Head of caudate nucleus (tissue), 42 donors: ENCODE measurements at regions of chr6 and their contacts with region 1.

Region 1: GRCh38 chr6:43059168-43060033 is at the starts of genes KLC4 and MRPL2:
- DNase-seq: peak; percentile 96 to 100 (median 99)

Region 2: GRCh38 chr6:42988486-42989020 is 70.8 kb before region 1 on chr6:
- intact Hi-C with region 1: no loop called
- DNase-seq: no peak

Region 3: DNA sequence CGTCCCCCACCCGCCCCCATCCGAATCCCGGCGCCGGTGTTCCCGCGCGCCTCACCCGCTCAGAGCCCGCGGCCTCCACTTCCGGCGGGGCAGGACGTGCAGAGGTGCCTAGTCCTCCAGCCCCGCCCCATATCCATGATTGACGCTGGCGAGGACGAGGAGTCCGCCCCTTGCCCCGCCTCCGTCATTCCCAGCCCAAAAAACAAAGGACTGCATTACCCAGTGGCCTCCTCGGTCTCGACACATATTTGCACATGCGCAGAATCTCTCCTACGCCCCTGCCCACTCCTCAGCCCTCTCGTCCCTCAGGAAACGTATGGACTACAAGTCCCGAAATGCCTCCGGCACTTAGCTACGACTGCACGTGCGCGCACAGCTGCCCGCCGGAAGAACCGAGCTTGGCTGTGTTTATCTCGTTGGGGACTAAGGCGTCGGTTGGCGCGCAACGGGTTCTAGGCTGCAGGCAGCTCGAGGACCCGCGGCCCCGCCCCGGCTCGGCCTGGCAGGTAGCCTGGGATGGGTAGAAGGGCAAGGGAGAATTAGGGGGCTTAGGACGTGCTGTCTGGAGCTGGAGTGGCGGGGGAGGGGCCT is 45.5 kb before region 1 on chr6 and contains the starts of genes KLHDC3 and MEA1:
- intact Hi-C with region 1: loop called (anchors 2 kb)
- DNase-seq: peak; percentile 98 to 100 (median 100)

Region 4: DNA sequence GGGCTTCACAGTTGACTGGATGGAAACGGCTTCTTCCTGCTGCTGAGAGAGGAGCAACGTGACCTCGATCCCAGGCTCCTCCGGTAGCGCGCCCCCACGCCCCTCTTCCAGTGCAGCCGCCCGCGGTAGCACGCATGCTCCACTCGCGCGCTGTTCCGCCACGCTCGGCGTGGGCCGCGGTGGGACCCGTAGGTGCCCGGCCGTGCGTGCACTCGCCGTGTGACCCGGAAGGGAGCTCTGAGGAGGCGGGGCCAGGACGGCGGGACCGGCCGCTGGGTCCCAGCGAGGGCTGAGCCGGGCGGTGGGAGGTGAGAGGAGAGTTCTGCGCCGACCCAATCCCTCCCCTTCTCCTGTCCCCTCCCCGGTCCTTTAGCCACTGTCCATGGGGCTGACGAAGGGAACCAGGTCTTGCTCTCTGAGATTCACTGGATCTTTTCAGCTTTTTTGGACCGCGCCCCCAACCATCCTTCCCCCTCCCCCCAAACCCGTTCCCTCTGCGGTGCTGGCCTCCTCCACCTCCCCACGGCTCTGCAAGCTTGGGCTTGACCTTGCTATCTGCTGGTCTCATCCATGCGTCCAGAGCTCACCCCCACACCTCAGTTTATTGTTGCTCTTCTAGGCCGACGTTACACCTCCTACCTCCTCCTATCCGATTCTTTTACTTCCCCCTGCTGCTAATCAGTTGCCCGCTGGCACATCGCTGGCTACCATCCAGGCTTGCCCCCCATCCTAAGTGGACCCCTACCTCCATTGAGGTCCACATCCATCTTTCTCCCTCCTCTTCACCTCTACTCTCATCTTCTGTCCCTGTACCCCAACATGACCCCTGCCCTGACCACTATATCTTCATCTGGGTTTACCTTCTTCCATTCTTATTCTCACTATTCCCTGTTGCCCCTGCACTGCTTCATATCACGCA is 122.8 kb after region 1 on chr6 and contains the start of gene CUL9:
- intact Hi-C with region 1: loop called (anchors 5 kb)
- DNase-seq: peak; percentile 61 to 95 (median 90)